A549 (cell line): ENCODE measurements at regions of chr10 and their contacts with region 1.

Region 1: DNA sequence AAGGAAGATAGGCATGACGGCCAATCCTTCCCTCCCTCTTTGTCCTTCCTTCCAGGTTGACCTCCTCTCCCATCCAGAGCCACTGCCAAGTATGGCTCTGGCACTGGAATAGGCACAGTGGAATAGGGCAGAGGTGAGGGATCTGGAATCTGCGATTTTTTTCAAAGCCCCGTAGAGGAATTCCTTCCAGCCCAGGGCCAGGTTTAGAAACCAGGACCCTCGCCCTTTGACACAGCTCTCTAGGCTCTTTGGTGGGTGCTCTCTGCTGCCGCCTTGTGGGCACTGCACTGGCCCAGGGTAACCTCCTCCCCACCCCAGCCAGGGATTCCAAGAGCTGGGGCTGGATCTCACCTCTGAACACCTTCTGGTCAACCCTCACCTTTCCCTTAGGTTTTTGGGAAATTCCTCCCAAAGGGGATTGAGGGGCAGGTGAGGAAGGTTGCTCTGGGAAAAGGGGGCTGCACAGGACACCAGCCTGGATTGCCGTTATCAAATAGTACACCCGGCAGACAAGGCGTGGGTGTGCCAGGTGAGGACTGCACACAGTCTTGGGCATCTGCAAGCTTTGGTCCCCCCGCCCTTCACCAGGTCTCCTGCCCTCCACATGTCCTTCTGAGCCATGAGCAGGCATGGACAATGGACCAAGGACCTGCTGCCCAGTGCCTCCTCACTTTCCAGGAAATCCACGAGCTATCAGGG is 22.8 kb downstream of the C10orf105 start:
- DNase-seq: peak; percentile 28 to 76
- ATAC-seq: peak; percentile 72 to 94; a peak in 5 of 6 replicates
- H3K4me3 ChIP-seq: no peak overlapping the region
- H3K27ac ChIP-seq: 0 out of 6 replicates have a peak overlapping the region, but pooled peaks of 1 of the 2 experiments have one; percentile 33
- H3K4me1 ChIP-seq: peaks cover 12% of the 10 kb centered on the region
- CTCF ChIP-seq: peak; percentile 83
- EP300 ChIP-seq: no peak
- POLR2A ChIP-seq: no peak
- RAD21 ChIP-seq: peak; percentile 60 to 62

Region 2: DNA sequence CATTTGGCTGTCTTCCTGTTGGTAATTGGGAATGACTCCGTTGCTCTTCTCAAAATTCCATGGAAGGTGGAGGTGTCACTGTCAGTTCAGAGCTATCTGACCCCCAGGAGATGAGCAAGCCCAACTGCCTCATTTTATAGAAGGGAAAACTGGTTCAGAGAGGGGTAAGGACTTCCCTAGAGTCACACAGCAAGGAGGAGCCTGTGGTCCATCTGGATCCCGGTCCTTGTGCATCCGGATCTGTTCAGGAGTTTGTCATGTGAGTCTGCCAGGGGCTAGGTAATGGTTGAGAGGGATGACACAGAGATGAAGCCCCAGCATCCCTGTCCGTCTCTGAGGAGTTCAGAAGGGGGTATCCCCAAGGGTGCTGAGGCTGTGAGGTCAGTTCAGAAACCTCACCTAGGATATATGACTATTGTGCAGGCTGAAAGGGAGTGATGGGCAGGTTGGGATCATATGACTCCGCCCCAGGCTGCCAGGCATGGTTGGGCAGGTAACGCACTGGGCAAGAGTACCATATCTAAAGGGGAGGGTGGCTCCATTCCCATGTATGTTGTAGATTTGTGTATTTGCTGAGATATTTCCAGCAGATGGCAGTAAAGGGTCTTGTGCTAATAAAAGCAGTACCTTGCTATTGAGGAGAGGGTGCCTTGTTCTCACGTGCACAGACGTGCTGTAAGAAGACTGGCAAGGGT is 393.8 kb before region 1 on chr10:
- CTCF ChIA-PET with region 1: interaction called, 11 read pairs
- POLR2A ChIA-PET with region 1: no interaction called
- DNase-seq: peak; percentile 73
- ATAC-seq: peak; percentile 75 to 90
- H3K4me3 ChIP-seq: no peak overlapping the region
- H3K27ac ChIP-seq: no peak overlapping the region
- H3K4me1 ChIP-seq: no peaks in the 10 kb centered on the region
- CTCF ChIP-seq: peak; percentile 56
- EP300 ChIP-seq: no peak
- POLR2A ChIP-seq: no peak
- RAD21 ChIP-seq: peak; percentile 37 to 52; a peak in 4 of 5 replicates

Region 3: DNA sequence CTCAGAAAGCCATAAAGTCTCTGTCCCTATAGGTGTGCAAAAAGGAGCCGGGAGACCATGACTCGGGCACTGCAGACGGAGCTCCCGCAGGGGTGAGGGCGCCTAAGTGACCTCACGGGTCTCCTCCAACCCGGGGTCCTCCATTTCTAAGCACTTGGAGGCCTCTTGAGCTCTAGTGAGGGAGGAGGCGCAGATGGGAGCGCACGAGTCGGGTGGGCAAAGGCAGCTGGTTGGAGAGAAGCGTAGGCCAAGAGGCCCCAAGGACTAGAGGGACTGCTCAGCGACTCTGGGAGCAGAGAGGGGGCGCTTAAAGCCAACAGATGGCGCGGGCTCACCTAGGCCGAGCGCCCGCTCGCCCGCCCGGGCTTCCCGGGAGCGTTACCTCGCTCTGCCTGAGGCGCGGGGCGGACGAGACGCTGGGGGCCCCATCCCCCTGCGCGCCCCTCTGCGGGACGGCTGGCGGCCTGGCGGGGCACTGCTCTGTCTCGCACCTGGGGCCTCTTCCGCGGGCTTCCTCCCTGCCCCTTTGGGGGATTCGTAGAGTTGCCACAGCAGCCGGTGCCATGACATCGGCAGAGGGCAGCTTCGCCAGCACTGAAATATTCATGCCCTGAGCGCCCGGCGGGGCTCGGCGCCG is 300.6 kb before region 1 on chr10:
- CTCF ChIA-PET with region 1: interaction called, 48 read pairs
- POLR2A ChIA-PET with region 1: no interaction called
- DNase-seq: peak; percentile 75 to 76
- ATAC-seq: peak; percentile 86 to 94
- H3K4me3 ChIP-seq: peak overlapping the region; percentile 58
- H3K27ac ChIP-seq: peak overlapping the region; percentile 71 to 91
- H3K4me1 ChIP-seq: peaks cover 7% of the 10 kb centered on the region; the same call in 1 of the 3 replicates
- CTCF ChIP-seq: peak; percentile 77
- EP300 ChIP-seq: no peak
- POLR2A ChIP-seq: no peak
- RAD21 ChIP-seq: peak; percentile 80 to 92

Region 4: DNA sequence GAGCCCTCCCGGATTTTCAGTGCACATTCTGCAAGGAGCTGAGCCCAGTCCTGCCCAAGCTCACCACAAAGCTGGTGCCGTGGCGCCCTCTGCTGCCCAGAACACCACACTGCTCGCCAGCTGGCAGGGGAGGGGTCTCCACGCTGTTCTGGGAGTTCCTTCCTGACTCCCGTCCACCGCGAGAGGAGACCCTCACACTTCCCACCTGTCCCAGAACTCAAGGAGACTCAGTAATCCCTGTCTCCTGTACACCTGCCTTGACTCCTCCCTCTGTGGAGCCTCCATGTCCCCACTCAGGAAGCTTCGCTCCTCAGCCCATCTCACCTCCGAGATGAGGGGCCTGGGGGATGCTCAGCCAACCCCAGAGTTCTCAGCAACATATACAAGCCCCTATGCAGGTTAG is 11.5 kb after region 1 on chr10:
- CTCF ChIA-PET with region 1: interaction called, 112 read pairs
- POLR2A ChIA-PET with region 1: no interaction called
- DNase-seq: peak; percentile 41 to 42
- ATAC-seq: peak; percentile 66 to 87
- H3K4me3 ChIP-seq: no peak overlapping the region
- H3K27ac ChIP-seq: peak overlapping the region in 1 of 2 experiments; percentile 52; a peak in 3 of 6 replicates
- H3K4me1 ChIP-seq: peaks cover 11% of the 10 kb centered on the region
- CTCF ChIP-seq: peak; percentile 74
- EP300 ChIP-seq: no peak
- POLR2A ChIP-seq: no peak
- RAD21 ChIP-seq: peak; percentile 79 to 83

Region 5: DNA sequence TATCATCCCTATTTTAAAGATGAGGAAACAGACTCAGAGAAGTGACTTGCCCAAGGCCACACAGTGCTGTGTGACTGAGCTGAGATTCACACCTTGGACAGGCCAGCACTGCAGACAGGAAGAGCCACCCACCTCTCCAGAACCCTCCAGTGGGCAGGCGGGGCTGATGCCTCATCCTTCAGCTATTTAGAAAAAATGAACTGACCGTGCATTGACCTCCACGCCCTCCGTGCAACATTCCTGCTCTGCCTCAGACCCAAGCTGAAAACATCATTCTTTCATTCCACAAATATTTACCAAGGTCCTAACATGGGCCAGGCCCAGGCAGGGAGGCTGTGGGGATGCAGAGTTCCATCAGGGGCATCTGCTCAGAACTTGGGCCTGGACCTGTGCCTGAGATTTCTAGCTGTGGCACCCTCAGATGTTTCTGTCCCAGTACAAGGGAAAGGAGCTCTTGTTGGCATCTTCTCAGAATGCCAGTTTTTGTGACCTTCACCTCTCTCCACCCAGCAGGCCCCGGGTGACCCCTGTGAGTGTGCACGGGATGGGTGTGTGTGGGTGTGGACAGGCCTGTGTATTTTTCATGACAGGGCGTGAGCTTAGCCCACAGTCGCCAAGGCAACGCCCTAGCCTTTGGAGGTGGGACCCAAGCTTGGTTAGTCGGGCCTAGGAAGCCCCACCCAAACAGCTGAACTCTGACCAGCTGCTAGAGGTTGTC is 70.1 kb after region 1 on chr10:
- CTCF ChIA-PET with region 1: interaction called, 42 read pairs
- POLR2A ChIA-PET with region 1: no interaction called
- DNase-seq: peak; percentile 85 to 98
- ATAC-seq: peak; percentile 81 to 88
- H3K4me3 ChIP-seq: no peak overlapping the region
- H3K27ac ChIP-seq: peak overlapping the region; percentile 98 to 99
- H3K4me1 ChIP-seq: peaks cover 89% of the 10 kb centered on the region
- CTCF ChIP-seq: no peak
- EP300 ChIP-seq: peak; percentile 75 to 87; a peak in 3 of 5 replicates
- POLR2A ChIP-seq: no peak
- RAD21 ChIP-seq: peak; percentile 0 to 16; a peak in 2 of 5 replicates

Region 6: GRCh38 chr10:71812016-71812912 is 115.5 kb after region 1 on chr10:
- CTCF ChIA-PET with region 1: interaction called, 20 read pairs
- POLR2A ChIA-PET with region 1: no interaction called
- DNase-seq: peak; percentile 61 to 82
- ATAC-seq: peak; percentile 61 to 89
- H3K4me3 ChIP-seq: no peak overlapping the region
- H3K27ac ChIP-seq: peak overlapping the region in 1 of 2 experiments; percentile 43; a peak in 3 of 6 replicates
- H3K4me1 ChIP-seq: peaks cover 18% of the 10 kb centered on the region; the same call in 2 of the 3 replicates
- CTCF ChIP-seq: peak; percentile 87
- EP300 ChIP-seq: no peak
- POLR2A ChIP-seq: no peak
- RAD21 ChIP-seq: peak; percentile 89 to 91

Region 7: GRCh38 chr10:72943498-72944234 is 1246.9 kb after region 1 on chr10:
- CTCF ChIA-PET with region 1: no interaction called
- POLR2A ChIA-PET with region 1: no interaction called
- DNase-seq: no peak
- ATAC-seq: no peak
- H3K4me3 ChIP-seq: no peak overlapping the region
- H3K27ac ChIP-seq: no peak overlapping the region
- H3K4me1 ChIP-seq: no peaks in the 10 kb centered on the region
- CTCF ChIP-seq: no peak
- EP300 ChIP-seq: no peak
- POLR2A ChIP-seq: no peak
- RAD21 ChIP-seq: no peak